ENCODE measurements at regions of chr3 and their contacts with region 1.

Region 1: GRCh38 chr3:11651900-11652299 is 8.2 kb upstream of the VGLL4 start:
- DNase-seq: peak in 1 of 2 donors; percentile 73
- ATAC-seq: peak in 2 of 3 donors; percentile 49 to 56
- H3K4me3 ChIP-seq: no peak overlapping the region
- H3K4me3 Mint-ChIP-seq: no peak overlapping the region
- H3K27ac ChIP-seq: no peak overlapping the region
- H3K27ac Mint-ChIP-seq: no peak overlapping the region
- H3K4me1 ChIP-seq: peaks cover 4% of the 10 kb centered on the region
- H3K4me1 Mint-ChIP-seq: peaks cover 0 to 6% of the 10 kb centered on the region in 2 donors
- H3K27me3 ChIP-seq: no peaks in the 10 kb centered on the region
- H3K27me3 Mint-ChIP-seq: no peaks in the 10 kb centered on the region
- CTCF ChIP-seq: peak; percentile 86

Region 2: GRCh38 chr3:11060500-11061251 is 591.2 kb before region 1 on chr3:
- intact Hi-C with region 1: loop called (anchors 5 kb)
- DNase-seq: peak; percentile 29 to 48
- ATAC-seq: peak; percentile 29 to 70 (median 48)
- H3K4me3 ChIP-seq: no peak overlapping the region
- H3K4me3 Mint-ChIP-seq: no peak overlapping the region
- H3K27ac ChIP-seq: no peak overlapping the region
- H3K27ac Mint-ChIP-seq: no peak overlapping the region
- H3K4me1 ChIP-seq: peaks cover 7% of the 10 kb centered on the region
- H3K4me1 Mint-ChIP-seq: no peaks in the 10 kb centered on the region
- H3K27me3 ChIP-seq: no peaks in the 10 kb centered on the region
- H3K27me3 Mint-ChIP-seq: peaks cover 7 to 18% of the 10 kb centered on the region in 2 donors
- CTCF ChIP-seq: peak; percentile 60

Region 3: DNA sequence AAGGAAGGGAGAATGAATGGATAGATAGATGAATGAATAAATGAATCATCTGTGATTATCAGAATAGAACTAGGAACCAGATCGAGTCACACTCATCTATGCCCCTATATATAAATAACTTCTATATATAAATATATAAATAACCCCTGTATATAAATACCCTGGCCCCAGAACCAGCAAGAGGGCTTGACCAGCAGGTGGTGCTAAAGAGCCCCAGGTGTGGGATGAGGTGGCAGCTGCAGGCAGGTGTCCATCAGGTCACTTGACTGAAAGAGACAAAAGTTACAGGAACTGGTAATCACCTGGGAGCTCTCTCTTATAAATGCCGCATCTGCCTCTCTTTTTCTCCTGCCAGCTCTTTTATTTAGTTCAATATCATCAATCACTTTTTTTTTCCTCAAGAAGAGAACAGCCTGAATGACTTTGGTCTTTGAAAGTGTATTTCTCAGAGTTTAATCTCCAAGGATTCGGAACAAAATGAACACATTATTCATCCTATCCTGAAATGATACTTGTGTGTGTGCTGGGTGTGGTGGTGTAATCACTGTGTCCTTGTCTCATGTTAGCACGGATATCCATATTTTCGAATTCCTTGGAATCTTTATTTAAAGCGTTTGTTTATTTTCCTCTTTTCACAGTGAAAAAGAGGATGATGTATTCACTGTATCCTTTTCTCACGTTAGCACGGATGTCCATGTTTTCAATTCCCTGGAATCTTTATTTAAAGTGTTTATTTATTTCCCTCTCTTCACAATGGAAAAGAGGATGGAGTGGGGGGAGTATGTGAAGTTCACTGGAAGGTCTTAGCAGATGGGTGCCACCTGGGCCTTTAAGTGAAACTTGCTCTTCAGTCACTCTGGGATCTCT is 415.1 kb before region 1 on chr3:
- intact Hi-C with region 1: loop called (anchors 1 kb)
- DNase-seq: peak; percentile 71 to 86
- ATAC-seq: peak; percentile 76 to 81 (median 78)
- H3K4me3 ChIP-seq: no peak overlapping the region
- H3K4me3 Mint-ChIP-seq: no peak overlapping the region
- H3K27ac ChIP-seq: no peak overlapping the region
- H3K27ac Mint-ChIP-seq: no peak overlapping the region
- H3K4me1 ChIP-seq: no peaks in the 10 kb centered on the region
- H3K4me1 Mint-ChIP-seq: no peaks in the 10 kb centered on the region
- H3K27me3 ChIP-seq: no peaks in the 10 kb centered on the region
- H3K27me3 Mint-ChIP-seq: peaks cover 26 to 35% of the 10 kb centered on the region in 2 donors
- CTCF ChIP-seq: peak; percentile 97

Region 4: GRCh38 chr3:11379233-11379823 is 272.6 kb before region 1 on chr3:
- intact Hi-C with region 1: loop called (anchors 1 kb)
- DNase-seq: peak in 1 of 2 donors; percentile 68
- ATAC-seq: peak in 1 of 3 donors; percentile 61
- H3K4me3 ChIP-seq: no peak overlapping the region
- H3K4me3 Mint-ChIP-seq: no peak overlapping the region
- H3K27ac ChIP-seq: no peak overlapping the region
- H3K27ac Mint-ChIP-seq: peak overlapping the region in 1 of 2 donors; percentile 18
- H3K4me1 ChIP-seq: no peaks in the 10 kb centered on the region
- H3K4me1 Mint-ChIP-seq: no peaks in the 10 kb centered on the region
- H3K27me3 ChIP-seq: no peaks in the 10 kb centered on the region
- H3K27me3 Mint-ChIP-seq: no peaks in the 10 kb centered on the region
- CTCF ChIP-seq: peak; percentile 58

Region 5: GRCh38 chr3:11803977-11804892 is 152.3 kb after region 1 on chr3:
- intact Hi-C with region 1: loop called (anchors 10 kb)
- DNase-seq: peak in 1 of 2 donors; percentile 72
- ATAC-seq: peak; percentile 65 to 86 (median 83)
- H3K4me3 ChIP-seq: no peak overlapping the region
- H3K4me3 Mint-ChIP-seq: no peak overlapping the region
- H3K27ac ChIP-seq: no peak overlapping the region
- H3K27ac Mint-ChIP-seq: no peak overlapping the region
- H3K4me1 ChIP-seq: no peaks in the 10 kb centered on the region
- H3K4me1 Mint-ChIP-seq: peaks cover 10 to 14% of the 10 kb centered on the region in 2 donors
- H3K27me3 ChIP-seq: no peaks in the 10 kb centered on the region
- H3K27me3 Mint-ChIP-seq: no peaks in the 10 kb centered on the region
- CTCF ChIP-seq: peak; percentile 69

Region 6: DNA sequence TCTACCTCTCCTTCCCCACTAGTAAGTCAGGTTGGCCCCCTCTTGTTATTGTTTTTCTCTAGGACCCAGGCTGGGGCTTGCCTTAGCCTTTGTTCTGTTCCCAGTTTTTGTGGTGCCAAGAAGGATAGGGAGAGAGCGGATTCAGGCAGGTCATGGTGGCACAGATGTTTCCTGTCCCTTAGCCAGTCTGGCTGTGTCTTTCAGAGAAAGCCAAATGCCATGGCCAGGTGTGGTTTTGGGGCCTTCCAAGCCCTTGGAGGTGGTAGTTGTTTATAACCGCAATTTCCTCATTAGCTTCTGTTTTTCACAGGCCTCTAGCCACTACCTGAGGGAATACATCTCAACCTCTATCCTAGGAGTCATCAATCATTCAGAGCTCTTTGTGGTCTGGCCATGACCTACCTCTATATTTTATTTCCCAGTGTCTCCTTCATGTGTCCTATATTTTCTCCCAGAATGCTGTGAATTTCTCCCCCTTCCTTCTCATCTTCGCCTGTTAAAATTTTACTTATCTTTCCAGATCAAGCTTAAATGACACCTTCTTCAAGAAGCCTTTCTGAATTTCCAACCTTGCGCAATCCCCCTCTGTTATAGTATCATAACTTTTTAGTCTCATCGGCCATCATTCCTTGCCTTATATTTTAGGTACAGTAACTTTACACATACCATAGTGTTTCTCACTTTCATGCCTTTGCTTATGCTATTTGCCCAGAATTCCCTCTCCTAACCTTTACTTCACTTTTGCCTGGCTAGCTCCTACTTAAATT is 468.7 kb after region 1 on chr3:
- intact Hi-C with region 1: no loop called
- DNase-seq: no peak
- ATAC-seq: no peak
- H3K4me3 ChIP-seq: no peak overlapping the region
- H3K4me3 Mint-ChIP-seq: no peak overlapping the region
- H3K27ac ChIP-seq: no peak overlapping the region
- H3K27ac Mint-ChIP-seq: no peak overlapping the region
- H3K4me1 ChIP-seq: no peaks in the 10 kb centered on the region
- H3K4me1 Mint-ChIP-seq: no peaks in the 10 kb centered on the region
- H3K27me3 ChIP-seq: no peaks in the 10 kb centered on the region
- H3K27me3 Mint-ChIP-seq: peaks cover 0 to 17% of the 10 kb centered on the region in 2 donors
- CTCF ChIP-seq: no peak